ENCODE measurements at regions of chr1 and their contacts with region 1.

Region 1: GRCh38 chr1:24201941-24202440 is 14.9 kb upstream of the IFNLR1 start:
- DNase-seq: peak; percentile 76
- H3K4me3 Mint-ChIP-seq: no peak overlapping the region
- H3K27ac Mint-ChIP-seq: no peak overlapping the region
- H3K4me1 Mint-ChIP-seq: peaks cover 23% of the 10 kb centered on the region
- H3K27me3 Mint-ChIP-seq: peaks cover 3% of the 10 kb centered on the region

Region 2: GRCh38 chr1:24119859-24120756 is 81.9 kb before region 1 on chr1:
- CTCF ChIA-PET with region 1: no interaction called
- POLR2A ChIA-PET with region 1: no interaction called
- intact Hi-C with region 1: no loop called
- DNase-seq: no peak
- H3K4me3 Mint-ChIP-seq: no peak overlapping the region
- H3K27ac Mint-ChIP-seq: no peak overlapping the region
- H3K4me1 Mint-ChIP-seq: no peaks in the 10 kb centered on the region
- H3K27me3 Mint-ChIP-seq: peaks cover 35% of the 10 kb centered on the region

Region 3: GRCh38 chr1:24150234-24151174 is 51.5 kb before region 1 on chr1:
- CTCF ChIA-PET with region 1: interaction called, 43 read pairs
- POLR2A ChIA-PET with region 1: interaction called, 4 read pairs
- intact Hi-C with region 1: no loop called
- DNase-seq: peak; percentile 93
- H3K4me3 Mint-ChIP-seq: peak overlapping the region; percentile 63
- H3K27ac Mint-ChIP-seq: no peak overlapping the region
- H3K4me1 Mint-ChIP-seq: peaks cover 17% of the 10 kb centered on the region
- H3K27me3 Mint-ChIP-seq: peaks cover 16% of the 10 kb centered on the region

Region 4: GRCh38 chr1:24277420-24278169 is 75.6 kb after region 1 on chr1:
- CTCF ChIA-PET with region 1: interaction called, 10 read pairs
- POLR2A ChIA-PET with region 1: no interaction called
- intact Hi-C with region 1: no loop called
- DNase-seq: peak; percentile 40
- H3K4me3 Mint-ChIP-seq: no peak overlapping the region
- H3K27ac Mint-ChIP-seq: peak overlapping the region; percentile 20
- H3K4me1 Mint-ChIP-seq: peaks cover 9% of the 10 kb centered on the region
- H3K27me3 Mint-ChIP-seq: peaks cover 20% of the 10 kb centered on the region

Region 5: GRCh38 chr1:24321697-24322469 is 119.9 kb after region 1 on chr1:
- CTCF ChIA-PET with region 1: interaction called, 13 read pairs
- POLR2A ChIA-PET with region 1: no interaction called
- intact Hi-C with region 1: no loop called
- DNase-seq: peak; percentile 86
- H3K4me3 Mint-ChIP-seq: peak overlapping the region; percentile 71
- H3K27ac Mint-ChIP-seq: no peak overlapping the region
- H3K4me1 Mint-ChIP-seq: peaks cover 37% of the 10 kb centered on the region
- H3K27me3 Mint-ChIP-seq: peaks cover 69% of the 10 kb centered on the region

Region 6: DNA sequence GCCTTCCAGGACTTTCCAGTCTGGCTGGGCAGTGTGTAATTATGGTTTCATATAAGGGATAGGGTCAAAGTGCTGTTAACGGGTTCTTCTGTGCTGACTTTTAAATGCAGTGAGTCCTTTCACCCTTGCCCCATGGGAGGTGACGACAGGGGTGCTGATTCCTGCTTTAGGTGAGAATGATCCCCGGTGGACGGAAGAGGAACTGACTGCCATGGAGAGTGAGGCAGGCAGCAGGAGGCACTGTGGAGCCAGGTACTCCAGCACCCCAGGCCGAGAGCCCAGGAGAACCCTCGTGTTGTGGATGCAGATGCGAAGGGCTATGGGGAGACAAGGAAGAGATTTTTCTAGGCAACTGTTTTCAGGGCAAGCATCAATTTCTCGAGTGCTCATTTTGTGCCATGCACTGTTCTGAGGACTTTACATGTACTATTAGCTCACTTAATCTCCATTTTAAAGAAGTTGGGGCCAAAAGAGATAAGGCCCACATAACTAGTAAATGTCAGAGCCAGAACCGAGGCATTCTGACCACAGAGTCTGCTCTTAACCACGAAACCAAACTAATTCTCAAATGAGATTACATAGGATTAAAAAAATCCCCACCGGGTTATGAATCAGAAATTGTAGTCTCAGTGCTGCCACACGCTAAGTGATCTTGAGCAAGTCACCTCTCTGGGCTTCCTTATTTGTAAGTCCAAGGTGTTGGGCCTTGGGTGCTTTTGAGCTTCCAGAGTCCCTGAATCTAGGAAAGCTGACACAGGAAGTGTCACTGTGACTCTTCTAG is 183.4 kb after region 1 on chr1:
- CTCF ChIA-PET with region 1: interaction called, 618 read pairs
- POLR2A ChIA-PET with region 1: interaction called, 6 read pairs
- intact Hi-C with region 1: no loop called
- DNase-seq: peak; percentile 64
- H3K4me3 Mint-ChIP-seq: no peak overlapping the region
- H3K27ac Mint-ChIP-seq: peak overlapping the region; percentile 7
- H3K4me1 Mint-ChIP-seq: peaks cover 26% of the 10 kb centered on the region
- H3K27me3 Mint-ChIP-seq: no peaks in the 10 kb centered on the region

Region 7: GRCh38 chr1:24541711-24542346 is 339.8 kb after region 1 on chr1:
- CTCF ChIA-PET with region 1: interaction called, 10 read pairs
- POLR2A ChIA-PET with region 1: no interaction called
- intact Hi-C with region 1: no loop called
- DNase-seq: peak; percentile 58
- H3K4me3 Mint-ChIP-seq: no peak overlapping the region
- H3K27ac Mint-ChIP-seq: peak overlapping the region; percentile 93
- H3K4me1 Mint-ChIP-seq: peaks cover 65% of the 10 kb centered on the region
- H3K27me3 Mint-ChIP-seq: no peaks in the 10 kb centered on the region

Region 8: DNA sequence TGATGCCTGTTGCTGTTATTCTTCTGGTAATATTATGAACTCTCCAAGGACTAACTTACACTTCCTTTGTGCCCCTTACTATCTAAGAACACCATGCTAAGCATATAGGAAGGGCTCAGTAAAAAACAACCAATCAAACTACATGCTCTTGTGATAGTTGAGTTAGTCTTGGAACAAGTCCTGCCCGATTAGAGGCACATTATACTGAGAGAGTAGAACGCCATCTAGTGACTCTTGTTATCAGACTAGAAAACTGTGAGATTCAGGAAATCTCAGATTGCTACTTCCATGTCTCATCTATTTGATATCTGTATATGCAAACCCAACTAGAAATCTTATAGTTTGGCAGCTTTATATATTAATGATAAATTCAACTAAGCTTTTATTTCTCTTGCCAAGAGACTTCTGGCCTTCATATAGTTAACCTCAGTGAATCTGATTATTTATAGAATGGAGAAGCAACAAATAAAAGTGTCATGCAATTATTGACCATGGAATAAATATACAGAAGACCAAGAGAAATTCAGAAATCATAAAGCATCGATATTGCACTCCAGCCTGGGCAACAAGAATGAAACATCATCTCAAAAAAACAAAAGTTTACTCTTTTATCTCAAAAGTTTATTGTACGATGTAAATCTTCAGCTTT is 433.3 kb after region 1 on chr1:
- CTCF ChIA-PET with region 1: interaction called, 9 read pairs
- POLR2A ChIA-PET with region 1: no interaction called
- intact Hi-C with region 1: loop called (anchors 1 kb)
- DNase-seq: no peak
- H3K4me3 Mint-ChIP-seq: no peak overlapping the region
- H3K27ac Mint-ChIP-seq: peak overlapping the region; percentile 25
- H3K4me1 Mint-ChIP-seq: peaks cover 14% of the 10 kb centered on the region
- H3K27me3 Mint-ChIP-seq: peaks cover 2% of the 10 kb centered on the region